CD8-positive, alpha-beta T cell (primary cell): ENCODE measurements at regions of chr10 and their contacts with region 1.

Region 1: GRCh38 chr10:119488675-119489074 is 53.8 kb downstream of the RGS10 start:
- DNase-seq: no peak
- ATAC-seq: no peak
- H3K4me3 ChIP-seq: no peak overlapping the region
- H3K4me3 Mint-ChIP-seq: peak overlapping the region; percentile 2
- H3K27ac ChIP-seq: peak overlapping the region in 1 of 2 experiments; percentile 80
- H3K27ac Mint-ChIP-seq: peak overlapping the region; percentile 90
- H3K4me1 ChIP-seq: peaks cover 43% of the 10 kb centered on the region
- H3K4me1 Mint-ChIP-seq: peaks cover 40% of the 10 kb centered on the region
- H3K27me3 ChIP-seq: no peaks in the 10 kb centered on the region
- H3K27me3 Mint-ChIP-seq: no peaks in the 10 kb centered on the region
- CTCF ChIP-seq: no peak

Region 2: DNA sequence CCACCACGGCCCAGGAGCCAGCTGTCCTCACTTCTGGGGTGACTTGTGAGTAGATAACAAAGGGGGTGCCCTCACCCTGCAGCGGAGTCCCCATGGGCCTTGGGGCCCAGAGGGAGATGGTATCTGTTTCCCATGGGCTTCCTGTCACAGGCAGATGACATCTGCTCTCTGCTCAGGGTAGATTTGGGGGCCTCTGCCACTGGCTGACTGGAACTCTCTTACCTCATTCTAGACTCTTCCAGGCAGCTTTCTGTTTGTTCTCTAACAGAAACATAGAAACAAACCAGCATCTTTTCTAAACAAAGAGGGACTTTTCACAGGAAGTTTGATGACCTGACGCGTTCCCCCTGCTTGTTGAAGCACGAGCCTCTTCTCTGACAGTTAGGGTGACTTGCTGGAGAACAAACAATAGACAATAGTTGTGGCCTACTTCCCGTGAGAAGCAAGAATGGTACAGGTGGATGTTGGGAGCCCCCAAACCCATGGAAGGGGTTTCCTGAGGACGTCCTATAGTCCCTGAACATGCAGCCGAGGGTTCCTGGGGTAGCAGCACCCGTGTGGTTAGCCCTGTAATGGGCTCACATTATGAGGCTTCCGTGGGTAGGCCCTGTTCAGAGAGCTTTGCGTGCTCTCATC is 219.7 kb before region 1 on chr10:
- CTCF ChIA-PET with region 1: no interaction called
- POLR2A ChIA-PET with region 1: no interaction called
- intact Hi-C with region 1: loop called in 1 of 2 experiments (anchors 1 kb)
- DNase-seq: peak; percentile 45 to 97 (median 75)
- ATAC-seq: peak; percentile 90
- H3K4me3 ChIP-seq: no peak overlapping the region
- H3K4me3 Mint-ChIP-seq: peak overlapping the region; percentile 33
- H3K27ac ChIP-seq: peak overlapping the region; percentile 68 to 100
- H3K27ac Mint-ChIP-seq: peak overlapping the region; percentile 97
- H3K4me1 ChIP-seq: peaks cover 42% of the 10 kb centered on the region
- H3K4me1 Mint-ChIP-seq: peaks cover 52% of the 10 kb centered on the region
- H3K27me3 ChIP-seq: no peaks in the 10 kb centered on the region
- H3K27me3 Mint-ChIP-seq: no peaks in the 10 kb centered on the region
- CTCF ChIP-seq: no peak